ENCODE measurements at regions of chr13 and their contacts with region 1.

Region 1: DNA sequence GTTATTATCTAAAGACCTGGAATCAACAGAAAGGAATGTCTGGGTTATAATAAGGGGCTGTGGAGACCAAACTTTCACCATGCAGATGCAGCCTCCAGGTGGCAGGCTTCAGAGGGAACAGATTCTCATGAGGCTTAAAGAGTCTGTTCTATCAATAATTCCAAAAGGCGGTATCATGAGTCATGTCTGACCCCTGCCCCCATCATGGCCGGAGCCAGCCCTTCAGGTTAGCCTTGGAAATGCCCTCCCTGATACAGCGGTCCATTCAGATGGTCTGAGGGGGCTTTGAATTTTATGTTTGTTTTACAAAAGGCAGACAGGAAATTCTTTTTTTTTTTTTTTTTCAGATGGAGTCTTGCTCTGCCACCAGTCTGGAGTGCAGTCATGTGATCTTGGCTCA is 21.7 kb upstream of the LAMP1 start:
- DNase-seq: no peak
- H3K4me3 Mint-ChIP-seq: no peak overlapping the region
- H3K27ac Mint-ChIP-seq: no peak overlapping the region
- H3K4me1 Mint-ChIP-seq: peaks cover 7% of the 10 kb centered on the region
- H3K27me3 Mint-ChIP-seq: peaks cover 1% of the 10 kb centered on the region

Region 2: GRCh38 chr13:113374511-113375175 is 99.3 kb after region 1 on chr13:
- intact Hi-C with region 1: loop called (anchors 5 kb)
- DNase-seq: no peak
- H3K4me3 Mint-ChIP-seq: no peak overlapping the region
- H3K27ac Mint-ChIP-seq: no peak overlapping the region
- H3K4me1 Mint-ChIP-seq: no peaks in the 10 kb centered on the region
- H3K27me3 Mint-ChIP-seq: peaks cover 6% of the 10 kb centered on the region

Region 3: DNA sequence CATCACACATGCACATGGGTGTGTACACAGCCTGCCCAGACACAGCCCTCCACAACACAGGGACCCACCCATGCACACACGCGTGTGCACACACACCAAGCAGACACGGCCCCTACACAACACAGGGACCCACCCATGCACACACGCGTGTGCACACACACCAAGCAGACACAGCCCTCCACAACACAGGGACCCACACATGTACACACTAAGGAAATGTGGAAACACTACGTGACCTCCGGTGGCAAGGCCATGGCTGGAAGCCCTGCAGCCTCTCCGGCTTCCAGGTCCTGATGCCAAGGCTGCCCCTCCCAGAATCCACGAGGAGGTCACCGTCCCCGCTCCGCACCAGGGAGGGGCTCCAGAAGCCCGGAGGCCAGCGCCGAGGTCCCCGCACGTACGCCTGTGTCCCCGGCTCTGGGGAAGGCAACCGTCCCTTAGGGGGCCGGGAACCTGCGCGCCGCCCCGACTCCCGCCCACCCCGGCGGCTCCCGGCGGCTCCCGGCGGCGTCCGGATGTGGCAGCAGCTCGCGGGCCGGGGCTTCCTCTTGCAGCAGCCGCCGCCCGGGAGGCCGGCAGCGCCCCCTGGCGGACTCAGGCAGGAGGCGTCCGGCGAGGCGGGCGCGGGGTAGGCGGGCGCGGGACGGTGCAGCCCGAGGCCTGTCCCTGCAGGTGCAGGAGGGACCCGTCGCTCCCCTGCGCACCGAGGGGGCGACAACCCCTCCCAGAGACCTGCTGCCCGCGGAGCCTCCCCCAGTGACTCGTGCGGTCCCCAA is 118.4 kb after region 1 on chr13:
- intact Hi-C with region 1: loop called (anchors 1 kb)
- DNase-seq: peak; percentile 80
- H3K4me3 Mint-ChIP-seq: peak overlapping the region; percentile 89
- H3K27ac Mint-ChIP-seq: peak overlapping the region; percentile 66
- H3K4me1 Mint-ChIP-seq: peaks cover 5% of the 10 kb centered on the region
- H3K27me3 Mint-ChIP-seq: peaks cover 10% of the 10 kb centered on the region

Measured in activated T-helper 1 cell treated with anti-CD3 and anti-CD28 coated beads, Interleukin-12 subunit alpha, Interleukin-12 subunit beta, Interleukin-2, Interleukin-4 antibody, amounts not matched to agents 30 ng/mL and 10 ng/mL and 1 ng/mL, durations not matched to agents 14 hours and 24 hours and 36 hours (primary cell).